ENCODE measurements at regions of chr11 and their contacts with region 1.

Region 1: DNA sequence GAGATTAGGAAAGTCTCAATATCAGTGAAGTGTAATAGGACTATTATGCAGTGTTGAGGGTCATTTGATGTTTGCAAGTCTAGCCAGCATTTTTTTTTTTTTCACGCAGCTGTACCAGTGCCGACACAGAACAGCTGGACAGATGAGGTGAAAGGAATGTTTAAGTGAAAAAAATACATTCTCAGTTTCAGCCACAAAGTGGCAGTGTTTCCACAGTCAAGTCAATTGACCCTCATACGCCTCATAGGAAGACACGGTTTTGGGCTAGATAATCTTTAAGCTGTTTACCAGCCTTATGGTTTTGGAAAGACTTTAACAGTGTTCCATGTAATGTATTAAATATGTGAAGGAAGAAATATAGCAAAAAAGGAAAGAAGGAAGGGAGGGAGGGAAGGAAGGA is 349.9 kb upstream of the ANO3 start:
- DNase-seq: no peak
- H3K4me3 ChIP-seq: no peak overlapping the region
- H3K27ac ChIP-seq: no peak overlapping the region
- H3K4me1 ChIP-seq: no peaks in the 10 kb centered on the region
- H3K27me3 ChIP-seq: no peaks in the 10 kb centered on the region
- CTCF ChIP-seq: peak in 2 of 3 experiments; percentile 42 to 69; a peak in 3 of 4 replicates
- EP300 ChIP-seq: no peak
- POLR2A ChIP-seq: no peak
- RAD21 ChIP-seq: peak; percentile 87 to 88

Region 2: DNA sequence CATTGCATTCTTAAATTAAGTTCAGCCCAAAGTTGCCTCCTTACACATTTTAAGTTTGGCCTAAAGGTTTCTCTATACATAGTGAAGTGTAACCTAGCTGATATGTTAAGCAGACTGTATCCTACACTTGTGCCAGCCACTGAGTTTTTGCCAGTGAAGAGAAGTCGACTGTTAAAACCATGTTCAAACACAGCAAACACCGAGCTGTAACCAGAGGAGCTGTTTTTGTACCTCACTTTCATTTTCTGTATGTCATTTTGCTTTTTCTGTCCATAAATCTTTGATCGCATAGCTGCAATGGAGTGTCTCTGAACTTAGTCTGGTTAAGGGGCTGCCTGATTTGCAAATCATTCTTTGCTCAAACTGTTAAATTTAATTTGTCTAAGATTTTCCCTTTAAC is 1081.5 kb before region 1 on chr11:
- CTCF ChIA-PET with region 1: no interaction called
- POLR2A ChIA-PET with region 1: no interaction called
- DNase-seq: no peak
- H3K4me3 ChIP-seq: no peak overlapping the region
- H3K27ac ChIP-seq: no peak overlapping the region
- H3K4me1 ChIP-seq: no peaks in the 10 kb centered on the region
- H3K27me3 ChIP-seq: no peaks in the 10 kb centered on the region
- CTCF ChIP-seq: no peak
- EP300 ChIP-seq: no peak
- POLR2A ChIP-seq: no peak
- RAD21 ChIP-seq: no peak

Region 3: GRCh38 chr11:25529572-25529971 is 452.4 kb before region 1 on chr11:
- CTCF ChIA-PET with region 1: no interaction called
- POLR2A ChIA-PET with region 1: no interaction called
- DNase-seq: no peak
- H3K4me3 ChIP-seq: no peak overlapping the region
- H3K27ac ChIP-seq: no peak overlapping the region
- H3K4me1 ChIP-seq: peaks cover 0 to 2% (median under 1%) of the 10 kb centered on the region in 4 experiments; a peak in 1 of 7 replicates
- H3K27me3 ChIP-seq: no peaks in the 10 kb centered on the region
- CTCF ChIP-seq: no peak
- EP300 ChIP-seq: no peak
- POLR2A ChIP-seq: no peak
- RAD21 ChIP-seq: no peak

Region 4: DNA sequence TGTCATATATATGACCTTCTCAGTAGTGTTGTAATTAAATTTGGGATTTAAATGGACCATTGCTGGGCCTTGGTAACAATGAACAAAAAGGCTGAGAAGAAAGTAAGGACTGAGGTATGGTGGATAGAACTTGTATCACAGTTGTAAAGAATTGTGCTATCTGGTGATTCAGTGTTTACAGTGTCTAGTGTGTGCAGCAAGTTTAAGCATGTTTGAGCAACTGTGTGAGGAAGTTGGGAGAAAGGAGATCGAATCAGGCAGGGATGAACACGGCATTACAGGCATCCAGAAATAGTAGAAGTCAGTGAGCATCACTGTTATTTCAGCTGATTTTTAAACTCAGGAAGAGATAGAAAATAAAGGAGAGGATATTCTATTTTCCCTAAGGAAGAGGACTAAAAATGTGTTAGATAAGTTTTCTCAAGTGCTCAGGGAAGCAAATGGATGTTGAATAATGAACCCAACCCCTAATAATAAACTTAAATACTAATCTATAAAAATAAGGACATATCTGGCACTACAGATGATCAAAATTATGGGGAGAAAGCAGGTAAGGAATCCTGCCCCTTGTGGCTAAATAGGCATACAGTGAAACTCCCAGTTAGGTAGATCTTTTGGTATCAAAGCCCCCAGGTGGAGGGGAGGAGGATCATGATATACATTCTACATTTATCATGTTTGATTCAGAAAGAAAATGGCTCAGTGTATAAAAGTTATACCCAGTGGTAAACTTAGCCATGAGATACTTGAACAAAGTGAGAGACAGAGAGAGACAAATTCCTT is 11.1 kb before region 1 on chr11:
- CTCF ChIA-PET with region 1: interaction called, 25 read pairs
- POLR2A ChIA-PET with region 1: no interaction called
- DNase-seq: no peak
- H3K4me3 ChIP-seq: no peak overlapping the region
- H3K27ac ChIP-seq: no peak overlapping the region
- H3K4me1 ChIP-seq: no peaks in the 10 kb centered on the region
- H3K27me3 ChIP-seq: no peaks in the 10 kb centered on the region
- CTCF ChIP-seq: peak in 2 of 3 experiments; percentile 56 to 74; a peak in 3 of 4 replicates
- EP300 ChIP-seq: no peak
- POLR2A ChIP-seq: no peak
- RAD21 ChIP-seq: peak; percentile 30 to 42; a peak in 2 of 4 replicates

Region 5: GRCh38 chr11:25992294-25992693 is 10.3 kb after region 1 on chr11:
- CTCF ChIA-PET with region 1: interaction called, 10 read pairs
- POLR2A ChIA-PET with region 1: no interaction called
- DNase-seq: no peak
- H3K4me3 ChIP-seq: no peak overlapping the region
- H3K27ac ChIP-seq: no peak overlapping the region
- H3K4me1 ChIP-seq: no peaks in the 10 kb centered on the region
- H3K27me3 ChIP-seq: no peaks in the 10 kb centered on the region
- CTCF ChIP-seq: no peak
- EP300 ChIP-seq: no peak
- POLR2A ChIP-seq: no peak
- RAD21 ChIP-seq: no peak

Region 6: DNA sequence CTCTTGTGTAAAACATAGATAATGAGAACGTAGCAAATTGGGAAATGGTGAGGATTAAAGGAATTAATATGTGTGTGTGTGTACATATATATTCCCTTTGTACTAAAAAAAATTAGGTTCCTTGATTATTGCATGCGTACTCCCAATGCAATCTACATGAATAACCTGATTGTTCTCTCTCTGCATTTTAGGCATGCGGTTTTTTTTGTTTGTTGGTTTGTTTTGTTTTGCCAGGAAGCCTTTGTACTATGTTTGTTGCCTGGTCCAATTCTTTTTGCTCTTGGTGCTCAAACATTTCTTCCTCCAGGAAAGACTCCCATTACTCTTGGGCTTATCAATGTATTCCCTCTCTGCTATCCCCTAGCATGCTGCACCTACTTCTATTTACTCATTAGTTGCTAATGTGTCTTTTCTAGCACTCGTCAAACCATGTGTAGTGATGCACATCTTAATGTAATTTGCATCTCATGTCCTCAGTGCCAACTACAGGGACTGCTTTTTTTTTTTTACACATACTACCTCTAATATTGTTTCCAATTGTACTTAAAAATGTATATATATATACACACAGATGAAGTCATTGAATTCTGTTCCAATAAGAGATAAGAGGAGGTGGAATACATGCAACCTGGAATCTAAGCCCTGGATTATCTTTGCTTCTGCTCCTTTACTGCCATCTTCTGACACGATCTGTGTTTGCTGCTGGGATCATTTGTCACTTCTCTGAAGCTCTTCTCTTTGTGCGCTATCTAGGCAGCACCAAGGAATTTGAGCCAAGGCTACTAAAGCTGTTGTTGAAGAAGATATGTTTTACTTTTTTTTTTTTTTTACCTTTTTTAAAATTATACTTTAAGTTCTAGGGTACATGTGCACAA is 152.7 kb after region 1 on chr11:
- CTCF ChIA-PET with region 1: interaction called, 70 read pairs
- POLR2A ChIA-PET with region 1: no interaction called
- DNase-seq: no peak
- H3K4me3 ChIP-seq: no peak overlapping the region
- H3K27ac ChIP-seq: no peak overlapping the region
- H3K4me1 ChIP-seq: 0 out of 7 replicates have a peak, but pooled peaks cover 0 to 2% (median 0%) of the 10 kb centered on the region in 4 experiments
- H3K27me3 ChIP-seq: no peaks in the 10 kb centered on the region
- CTCF ChIP-seq: peak in 2 of 3 experiments; percentile 65 to 66; a peak in 3 of 4 replicates
- EP300 ChIP-seq: no peak
- POLR2A ChIP-seq: no peak
- RAD21 ChIP-seq: peak; percentile 76 to 83

Region 7: GRCh38 chr11:26227296-26227695 is 245.3 kb after region 1 on chr11:
- CTCF ChIA-PET with region 1: interaction called, 16 read pairs
- POLR2A ChIA-PET with region 1: no interaction called
- DNase-seq: no peak
- H3K4me3 ChIP-seq: no peak overlapping the region
- H3K27ac ChIP-seq: no peak overlapping the region
- H3K4me1 ChIP-seq: no peaks in the 10 kb centered on the region
- H3K27me3 ChIP-seq: no peaks in the 10 kb centered on the region
- CTCF ChIP-seq: peak in 1 of 3 experiments; percentile 39; a peak in 2 of 4 replicates
- EP300 ChIP-seq: no peak
- POLR2A ChIP-seq: no peak
- RAD21 ChIP-seq: peak; percentile 74 to 77

Region 8: GRCh38 chr11:26276798-26277424 is 294.9 kb after region 1 on chr11:
- CTCF ChIA-PET with region 1: interaction called, 25 read pairs
- POLR2A ChIA-PET with region 1: interaction called, 3 read pairs
- DNase-seq: peak; percentile 54 to 79
- H3K4me3 ChIP-seq: no peak overlapping the region
- H3K27ac ChIP-seq: no peak overlapping the region
- H3K4me1 ChIP-seq: peaks cover 0 to 3% (median 1%) of the 10 kb centered on the region in 4 experiments; a peak in 2 of 7 replicates
- H3K27me3 ChIP-seq: no peaks in the 10 kb centered on the region
- CTCF ChIP-seq: peak in 2 of 3 experiments; percentile 80 to 86; a peak in 3 of 4 replicates
- EP300 ChIP-seq: no peak
- POLR2A ChIP-seq: no peak
- RAD21 ChIP-seq: peak; percentile 96